A549 (cell line): ENCODE measurements at regions of chr17 and their contacts with region 1.

Region 1: GRCh38 chr17:40121181-40122135 is at the start of gene MSL1:
- DNase-seq: peak; percentile 83 to 91
- ATAC-seq: peak; percentile 75 to 76
- H3K4me3 ChIP-seq: peak within 1 kb of the TSS; percentile 67
- H3K27ac ChIP-seq: peak within 1 kb of the TSS; percentile 94 to 100
- H3K4me1 ChIP-seq: peaks cover 24% of the 10 kb centered on the region
- CTCF ChIP-seq: no peak
- EP300 ChIP-seq: no peak
- POLR2A ChIP-seq: peak; percentile 46
- RAD21 ChIP-seq: no peak; a peak in 1 of 5 replicates
- polyA plus RNA-seq, gene MSL1: 87.8 and 95.1 TPM in 2 replicates

Region 2: DNA sequence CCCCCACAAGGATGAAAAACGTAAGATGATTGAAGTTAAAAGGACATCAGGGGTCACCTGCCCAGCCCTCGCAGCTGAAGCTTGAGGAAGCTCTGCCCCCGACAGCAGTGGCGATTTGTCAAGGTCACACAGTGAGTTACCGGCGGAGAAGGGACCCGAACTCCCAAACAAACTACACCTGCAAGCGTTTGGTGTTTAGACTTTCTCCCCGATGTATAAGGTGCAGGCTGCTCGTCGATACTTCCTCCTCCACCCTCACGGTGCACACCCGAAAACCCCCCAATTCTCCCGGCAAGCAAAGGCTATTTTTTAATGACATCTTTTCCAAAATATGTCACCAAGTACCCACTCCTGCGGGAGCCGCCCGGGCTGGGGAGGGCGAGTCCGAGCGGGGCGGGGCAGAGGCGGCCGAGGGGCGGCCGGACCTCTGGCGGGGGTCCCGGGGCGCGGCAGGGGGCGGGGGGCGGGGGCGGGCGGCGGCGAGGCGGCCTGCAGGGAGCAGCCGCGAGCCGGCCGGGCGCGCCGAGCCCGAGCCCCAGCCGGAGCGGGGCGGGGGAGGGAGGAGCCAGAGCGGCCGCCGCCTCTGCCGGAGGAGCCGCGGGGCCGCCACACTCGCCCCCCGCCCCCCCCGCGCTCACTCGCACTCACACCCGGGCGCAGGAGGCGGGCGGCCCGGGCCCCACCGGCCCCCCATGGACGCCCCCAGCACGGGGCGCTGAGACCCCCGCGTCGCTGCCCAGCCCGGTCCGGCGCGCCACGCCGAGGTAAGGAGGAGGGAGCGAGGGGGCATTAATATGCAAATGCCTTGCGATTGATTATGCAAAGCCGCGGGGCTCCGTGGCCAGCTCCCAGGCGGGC is 58.9 kb before region 1 on chr17 and contains the start of gene THRA:
- CTCF ChIA-PET with region 1: interaction called, 228 read pairs
- POLR2A ChIA-PET with region 1: no interaction called
- DNase-seq: peak in 1 of 2 experiments; percentile 68
- ATAC-seq: peak; percentile 65 to 70
- H3K4me3 ChIP-seq: peak within 1 kb of the TSS; percentile 98
- H3K27ac ChIP-seq: peak within 1 kb of the TSS; percentile 92 to 98
- H3K4me1 ChIP-seq: peaks cover 33% of the 10 kb centered on the region
- CTCF ChIP-seq: peak; percentile 86
- EP300 ChIP-seq: no peak
- POLR2A ChIP-seq: no peak
- RAD21 ChIP-seq: no peak; a peak in 3 of 5 replicates
- polyA plus RNA-seq, gene THRA: 20.1 and 27.4 TPM in 2 replicates

Region 3: GRCh38 chr17:40139566-40140058 is 18.2 kb after region 1 on chr17:
- CTCF ChIA-PET with region 1: interaction called, 77 read pairs
- POLR2A ChIA-PET with region 1: interaction called, 34 read pairs
- DNase-seq: no peak
- ATAC-seq: peak; percentile 13 to 36
- H3K4me3 ChIP-seq: peak overlapping the region; percentile 58
- H3K27ac ChIP-seq: peak overlapping the region; percentile 91 to 98
- H3K4me1 ChIP-seq: peaks cover 16% of the 10 kb centered on the region; the same call in 2 of the 3 replicates
- CTCF ChIP-seq: no peak
- EP300 ChIP-seq: no peak
- POLR2A ChIP-seq: no peak
- RAD21 ChIP-seq: no peak